ENCODE measurements at regions of chr10 and their contacts with region 1.

Region 1: GRCh38 chr10:74213571-74214162 is 62.6 kb downstream of the ADK start:
- DNase-seq: peak; percentile 59 to 68
- ATAC-seq: peak; percentile 19 to 73; a peak in 3 of 6 replicates
- H3K4me3 ChIP-seq: no peak overlapping the region
- H3K27ac ChIP-seq: no peak overlapping the region
- H3K4me1 ChIP-seq: 0 out of 3 replicates have a peak, but pooled peaks cover 4% of the 10 kb centered on the region
- CTCF ChIP-seq: peak; percentile 59; the same call in 2 of the 3 replicates
- EP300 ChIP-seq: no peak
- POLR2A ChIP-seq: no peak
- RAD21 ChIP-seq: peak; percentile 54 to 62

Region 2: DNA sequence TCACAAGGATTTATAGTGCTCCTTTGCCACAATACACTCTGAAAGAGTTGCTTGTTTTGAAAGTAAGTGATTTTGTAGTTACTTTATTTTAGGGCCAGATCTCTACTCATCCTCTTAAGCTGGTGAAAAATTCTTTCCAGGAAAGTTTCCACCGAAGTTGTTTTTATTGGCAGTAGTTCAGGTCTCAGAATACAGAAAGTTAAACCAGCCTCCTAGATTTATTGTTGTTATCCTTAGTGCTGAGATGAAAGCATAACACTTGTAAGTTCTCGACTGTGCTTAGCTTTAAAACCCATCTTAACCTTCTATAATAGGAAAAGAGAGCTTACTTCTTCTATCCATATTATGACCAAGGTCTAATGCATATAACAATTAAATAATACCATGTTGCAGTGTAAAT is 68.5 kb before region 1 on chr10:
- CTCF ChIA-PET with region 1: interaction called, 14 read pairs
- POLR2A ChIA-PET with region 1: no interaction called
- DNase-seq: no peak
- ATAC-seq: no peak
- H3K4me3 ChIP-seq: no peak overlapping the region
- H3K27ac ChIP-seq: no peak overlapping the region
- H3K4me1 ChIP-seq: peaks cover 16% of the 10 kb centered on the region; the same call in 2 of the 3 replicates
- CTCF ChIP-seq: no peak
- EP300 ChIP-seq: no peak
- POLR2A ChIP-seq: no peak
- RAD21 ChIP-seq: no peak

Region 3: GRCh38 chr10:74189999-74190421 is 23.7 kb before region 1 on chr10:
- CTCF ChIA-PET with region 1: interaction called, 20 read pairs
- POLR2A ChIA-PET with region 1: no interaction called
- DNase-seq: peak in 1 of 2 experiments; percentile 61
- ATAC-seq: peak; percentile 78 to 91
- H3K4me3 ChIP-seq: 0 out of 3 replicates have a peak overlapping the region, but pooled peaks have one; percentile 2
- H3K27ac ChIP-seq: peak overlapping the region; percentile 73 to 86
- H3K4me1 ChIP-seq: peaks cover 38% of the 10 kb centered on the region
- CTCF ChIP-seq: no peak
- EP300 ChIP-seq: no peak
- POLR2A ChIP-seq: no peak
- RAD21 ChIP-seq: no peak

Region 4: GRCh38 chr10:74202356-74202755 is 11.3 kb before region 1 on chr10:
- CTCF ChIA-PET with region 1: interaction called, 16 read pairs
- POLR2A ChIA-PET with region 1: no interaction called
- DNase-seq: no peak
- ATAC-seq: no peak
- H3K4me3 ChIP-seq: no peak overlapping the region
- H3K27ac ChIP-seq: no peak overlapping the region
- H3K4me1 ChIP-seq: peaks cover 4% of the 10 kb centered on the region; the same call in 1 of the 3 replicates
- CTCF ChIP-seq: no peak
- EP300 ChIP-seq: no peak
- POLR2A ChIP-seq: no peak
- RAD21 ChIP-seq: no peak

Region 5: GRCh38 chr10:74282151-74282850 is 68.6 kb after region 1 on chr10:
- CTCF ChIA-PET with region 1: no interaction called
- POLR2A ChIA-PET with region 1: no interaction called
- DNase-seq: no peak
- ATAC-seq: no peak
- H3K4me3 ChIP-seq: no peak overlapping the region
- H3K27ac ChIP-seq: no peak overlapping the region
- H3K4me1 ChIP-seq: peaks cover 3% of the 10 kb centered on the region; the same call in 1 of the 3 replicates
- CTCF ChIP-seq: no peak
- EP300 ChIP-seq: no peak
- POLR2A ChIP-seq: no peak
- RAD21 ChIP-seq: no peak

Measured in A549 (cell line).